ENCODE measurements at regions of chr14 and their contacts with region 1.

Region 1: GRCh38 chr14:45426670-45427282 is 173.8 kb upstream of the MIS18BP1 start:
- DNase-seq: peak; percentile 79
- ATAC-seq: peak; percentile 84
- H3K4me3 ChIP-seq: no peak overlapping the region
- H3K27ac ChIP-seq: no peak overlapping the region
- H3K4me1 ChIP-seq: no peaks in the 10 kb centered on the region
- H3K27me3 ChIP-seq: 0 out of 2 replicates have a peak, but pooled peaks cover 5% of the 10 kb centered on the region
- CTCF ChIP-seq: peak; percentile 86

Region 2: GRCh38 chr14:45526715-45527549 is 100.2 kb after region 1 on chr14:
- CTCF ChIA-PET with region 1: interaction called, 7 read pairs
- POLR2A ChIA-PET with region 1: no interaction called
- intact Hi-C with region 1: loop called (anchors 1 kb)
- DNase-seq: peak; percentile 74
- ATAC-seq: peak; percentile 97
- H3K4me3 ChIP-seq: 0 out of 2 replicates have a peak overlapping the region, but pooled peaks have one; percentile 33
- H3K27ac ChIP-seq: no peak overlapping the region
- H3K4me1 ChIP-seq: peaks cover 9% of the 10 kb centered on the region; the same call in 1 of the 2 replicates
- H3K27me3 ChIP-seq: peaks cover 27% of the 10 kb centered on the region
- CTCF ChIP-seq: peak; percentile 82

Region 3: GRCh38 chr14:45940307-45940706 is 513.5 kb after region 1 on chr14:
- CTCF ChIA-PET with region 1: no interaction called
- POLR2A ChIA-PET with region 1: no interaction called
- intact Hi-C with region 1: loop called (anchors 10 kb)
- DNase-seq: peak; percentile 43
- ATAC-seq: 0 out of 2 replicates have a peak, but pooled peaks have one; percentile 37
- H3K4me3 ChIP-seq: no peak overlapping the region
- H3K27ac ChIP-seq: no peak overlapping the region
- H3K4me1 ChIP-seq: no peaks in the 10 kb centered on the region
- H3K27me3 ChIP-seq: peaks cover 33% of the 10 kb centered on the region
- CTCF ChIP-seq: peak; percentile 64

Region 4: DNA sequence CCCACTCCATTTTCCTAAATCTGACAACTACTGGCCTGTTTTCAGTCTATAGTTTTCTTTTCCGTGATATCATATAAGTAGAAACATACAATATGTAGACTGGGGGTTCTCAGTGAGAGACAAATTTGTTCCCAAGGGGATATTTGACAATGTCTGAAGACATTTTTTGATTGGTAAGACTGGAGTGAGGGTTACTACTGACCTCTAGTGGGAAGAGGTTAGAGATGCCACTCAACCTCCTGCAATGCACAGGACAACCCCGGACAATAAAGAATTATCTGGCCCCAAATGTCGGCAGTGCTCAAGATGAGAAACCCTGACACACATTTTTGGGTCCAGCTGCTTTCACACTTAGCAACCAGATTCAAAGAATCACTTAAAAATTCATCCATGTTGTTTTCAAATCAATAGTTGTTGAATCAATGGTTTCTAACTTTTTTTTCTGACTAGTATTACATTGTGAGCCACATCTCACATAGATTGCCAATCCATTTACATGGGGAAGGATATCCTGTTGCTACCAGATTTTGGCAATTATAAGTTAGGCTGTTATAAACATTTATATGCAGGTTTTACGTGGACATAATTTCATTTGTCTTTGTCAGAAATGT is 917.7 kb after region 1 on chr14:
- CTCF ChIA-PET with region 1: no interaction called
- POLR2A ChIA-PET with region 1: no interaction called
- intact Hi-C with region 1: loop called (anchors 2 kb)
- DNase-seq: peak; percentile 64
- ATAC-seq: peak; percentile 93
- H3K4me3 ChIP-seq: no peak overlapping the region
- H3K27ac ChIP-seq: no peak overlapping the region
- H3K4me1 ChIP-seq: no peaks in the 10 kb centered on the region
- H3K27me3 ChIP-seq: peaks cover 7% of the 10 kb centered on the region; the same call in 1 of the 2 replicates
- CTCF ChIP-seq: peak; percentile 81